HCT116 (cell line): ENCODE measurements at regions of chr4 and their contacts with region 1.

Region 1: GRCh38 chr4:114386637-114387233 is 211.9 kb upstream of the UGT8 start:
- DNase-seq: peak; percentile 38
- ATAC-seq: peak; percentile 53
- H3K4me3 ChIP-seq: no peak overlapping the region
- H3K27ac ChIP-seq: no peak overlapping the region
- H3K4me1 ChIP-seq: peaks cover 0 to 13% of the 10 kb centered on the region in 2 experiments; a peak in 2 of 4 replicates
- H3K27me3 ChIP-seq: no peaks in the 10 kb centered on the region
- CTCF ChIP-seq: peak; percentile 44 to 82 (median 76)
- POLR2A ChIP-seq: no peak
- RAD21 ChIP-seq: peak; percentile 91

Region 2: GRCh38 chr4:113106108-113106507 is 1280.6 kb before region 1 on chr4:
- CTCF ChIA-PET with region 1: interaction called, 4 read pairs
- POLR2A ChIA-PET with region 1: no interaction called
- RAD21 ChIA-PET with region 1: no interaction called
- intact Hi-C with region 1: loop called (anchors 5 kb)
- DNase-seq: peak; percentile 23
- ATAC-seq: peak; percentile 60; the same call in 1 of the 2 replicates
- H3K4me3 ChIP-seq: no peak overlapping the region
- H3K27ac ChIP-seq: no peak overlapping the region
- H3K4me1 ChIP-seq: no peaks in the 10 kb centered on the region
- H3K27me3 ChIP-seq: no peaks in the 10 kb centered on the region
- CTCF ChIP-seq: peak; percentile 38 to 57 (median 44); a peak in 5 of 6 replicates
- POLR2A ChIP-seq: no peak
- RAD21 ChIP-seq: peak; percentile 66

Region 3: GRCh38 chr4:113394730-113395530 is 991.8 kb before region 1 on chr4:
- CTCF ChIA-PET with region 1: interaction called, 12 read pairs
- POLR2A ChIA-PET with region 1: no interaction called
- RAD21 ChIA-PET with region 1: no interaction called
- intact Hi-C with region 1: loop called (anchors 2 kb)
- DNase-seq: peak; percentile 82
- ATAC-seq: peak; percentile 97
- H3K4me3 ChIP-seq: no peak overlapping the region
- H3K27ac ChIP-seq: no peak overlapping the region
- H3K4me1 ChIP-seq: peaks cover 4 to 20% of the 10 kb centered on the region in 2 experiments; a peak in 2 of 4 replicates
- H3K27me3 ChIP-seq: no peaks in the 10 kb centered on the region
- CTCF ChIP-seq: peak; percentile 56 to 86 (median 79)
- POLR2A ChIP-seq: no peak
- RAD21 ChIP-seq: peak; percentile 97

Region 4: DNA sequence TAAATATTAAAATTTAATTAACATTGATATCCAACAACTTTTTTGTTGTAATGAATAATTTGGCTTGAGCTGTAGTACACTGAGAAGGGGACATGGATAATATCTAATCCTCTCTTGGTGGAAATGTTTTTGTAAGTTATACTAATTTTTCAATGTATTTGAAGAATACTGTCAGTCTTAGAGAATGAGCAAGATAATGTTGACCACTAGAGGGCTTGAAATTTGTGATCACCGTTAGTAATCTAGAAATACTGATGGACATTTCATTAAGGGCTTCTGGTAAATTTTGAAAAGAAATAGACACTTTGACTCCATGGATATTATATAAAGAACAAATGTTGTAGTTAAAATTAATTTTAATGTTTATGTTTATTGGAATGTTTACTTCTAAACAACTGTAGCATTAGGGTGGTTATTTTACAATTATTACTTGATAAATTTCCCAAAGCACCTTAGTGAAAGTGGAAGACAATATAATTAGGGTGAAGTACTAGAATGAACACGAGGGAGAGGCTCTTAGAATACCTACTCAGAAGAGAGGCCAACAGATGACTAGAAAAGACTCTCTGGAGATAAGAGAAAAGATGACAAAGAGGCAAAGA is 605.2 kb before region 1 on chr4:
- CTCF ChIA-PET with region 1: no interaction called
- POLR2A ChIA-PET with region 1: no interaction called
- RAD21 ChIA-PET with region 1: no interaction called
- intact Hi-C with region 1: loop called (anchors 5 kb)
- DNase-seq: no peak
- ATAC-seq: peak; percentile 71
- H3K4me3 ChIP-seq: no peak overlapping the region
- H3K27ac ChIP-seq: no peak overlapping the region
- H3K4me1 ChIP-seq: no peaks in the 10 kb centered on the region
- H3K27me3 ChIP-seq: no peaks in the 10 kb centered on the region
- CTCF ChIP-seq: peak; percentile 39 to 75 (median 56); a peak in 5 of 6 replicates
- POLR2A ChIP-seq: no peak
- RAD21 ChIP-seq: peak; percentile 51

Region 5: GRCh38 chr4:114132830-114133229 is 253.9 kb before region 1 on chr4:
- CTCF ChIA-PET with region 1: no interaction called
- POLR2A ChIA-PET with region 1: no interaction called
- RAD21 ChIA-PET with region 1: no interaction called
- intact Hi-C with region 1: no loop called
- DNase-seq: no peak
- ATAC-seq: peak; percentile 73
- H3K4me3 ChIP-seq: no peak overlapping the region
- H3K27ac ChIP-seq: no peak overlapping the region
- H3K4me1 ChIP-seq: no peaks in the 10 kb centered on the region
- H3K27me3 ChIP-seq: no peaks in the 10 kb centered on the region
- CTCF ChIP-seq: peak in 2 of 3 experiments; percentile 44 to 61; a peak in 3 of 6 replicates
- POLR2A ChIP-seq: no peak
- RAD21 ChIP-seq: no peak

Region 6: GRCh38 chr4:114659386-114660008 is 272.8 kb after region 1 on chr4:
- CTCF ChIA-PET with region 1: interaction called, 7 read pairs
- POLR2A ChIA-PET with region 1: no interaction called
- RAD21 ChIA-PET with region 1: interaction called in 1 of 2 experiments, 4 read pairs
- intact Hi-C with region 1: loop called (anchors 1 kb)
- DNase-seq: peak; percentile 73
- ATAC-seq: peak; percentile 100
- H3K4me3 ChIP-seq: no peak overlapping the region
- H3K27ac ChIP-seq: no peak overlapping the region
- H3K4me1 ChIP-seq: no peaks in the 10 kb centered on the region
- H3K27me3 ChIP-seq: no peaks in the 10 kb centered on the region
- CTCF ChIP-seq: peak; percentile 74 to 95 (median 91)
- POLR2A ChIP-seq: no peak
- RAD21 ChIP-seq: peak; percentile 87

Region 7: GRCh38 chr4:115090483-115091075 is 703.8 kb after region 1 on chr4:
- CTCF ChIA-PET with region 1: no interaction called
- POLR2A ChIA-PET with region 1: no interaction called
- RAD21 ChIA-PET with region 1: no interaction called
- intact Hi-C with region 1: loop called (anchors 5 kb)
- DNase-seq: peak; percentile 32
- ATAC-seq: peak; percentile 50
- H3K4me3 ChIP-seq: no peak overlapping the region
- H3K27ac ChIP-seq: no peak overlapping the region
- H3K4me1 ChIP-seq: no peaks in the 10 kb centered on the region
- H3K27me3 ChIP-seq: no peaks in the 10 kb centered on the region
- CTCF ChIP-seq: peak; percentile 46 to 68 (median 51); a peak in 5 of 6 replicates
- POLR2A ChIP-seq: no peak
- RAD21 ChIP-seq: peak; percentile 74